Naive thymus-derived CD4-positive, alpha-beta T cell (primary cell): ENCODE measurements at regions of chr13 and their contacts with region 1.

Region 1: GRCh38 chr13:74015137-74015536 is 119.1 kb downstream of the KLF12 start:
- DNase-seq: no peak
- ATAC-seq: no peak
- H3K4me3 ChIP-seq: no peak overlapping the region
- H3K4me3 Mint-ChIP-seq: no peak overlapping the region
- H3K27ac ChIP-seq: no peak overlapping the region
- H3K27ac Mint-ChIP-seq: peak overlapping the region in 1 of 9 donors; percentile 65
- H3K4me1 ChIP-seq: peaks cover 0 to 4% of the 10 kb centered on the region in 2 donors
- H3K4me1 Mint-ChIP-seq: peaks cover 11 to 94% (median 84%) of the 10 kb centered on the region in 7 donors
- H3K27me3 ChIP-seq: no peaks in the 10 kb centered on the region
- H3K27me3 Mint-ChIP-seq: no peaks in the 10 kb centered on the region

Region 2: GRCh38 chr13:73924607-73925006 is 90.5 kb before region 1 on chr13:
- CTCF ChIA-PET with region 1: no interaction called
- POLR2A ChIA-PET with region 1: interaction called, 11 read pairs
- intact Hi-C with region 1: no loop called
- DNase-seq: no peak
- ATAC-seq: no peak
- H3K4me3 ChIP-seq: no peak overlapping the region
- H3K4me3 Mint-ChIP-seq: peak overlapping the region in 6 of 10 donors; percentile 10 to 49 (median 41)
- H3K27ac ChIP-seq: no peak overlapping the region
- H3K27ac Mint-ChIP-seq: peak overlapping the region in 5 of 9 donors; percentile 12 to 45 (median 33)
- H3K4me1 ChIP-seq: peaks cover 10 to 38% of the 10 kb centered on the region in 2 donors
- H3K4me1 Mint-ChIP-seq: peaks cover 21 to 95% (median 85%) of the 10 kb centered on the region in 7 donors
- H3K27me3 ChIP-seq: no peaks in the 10 kb centered on the region
- H3K27me3 Mint-ChIP-seq: no peaks in the 10 kb centered on the region

Region 3: DNA sequence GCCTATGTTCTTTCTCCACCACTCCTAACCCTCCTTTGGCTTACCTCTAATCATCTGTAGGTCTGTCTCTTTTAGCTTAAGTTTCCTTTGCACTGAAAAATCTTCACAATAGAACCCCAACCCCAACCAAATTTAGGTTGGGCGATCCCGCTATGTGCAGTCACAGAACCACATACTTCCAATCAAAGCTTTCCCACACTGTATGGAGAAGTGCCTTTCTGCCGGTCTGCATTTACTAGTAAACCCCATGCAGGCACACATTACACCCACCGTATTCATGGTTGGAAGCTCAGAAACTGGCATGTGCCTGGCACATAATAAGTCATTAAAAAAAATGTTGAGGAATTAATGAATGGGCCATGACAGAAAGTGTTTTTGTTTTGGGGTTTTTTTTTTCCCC is 39.4 kb before region 1 on chr13:
- CTCF ChIA-PET with region 1: interaction called, 6 read pairs
- POLR2A ChIA-PET with region 1: no interaction called
- intact Hi-C with region 1: loop called in 1 of 2 experiments (anchors 5 kb)
- DNase-seq: no peak
- ATAC-seq: no peak
- H3K4me3 ChIP-seq: no peak overlapping the region
- H3K4me3 Mint-ChIP-seq: peak overlapping the region in 1 of 10 donors; percentile 1
- H3K27ac ChIP-seq: no peak overlapping the region
- H3K27ac Mint-ChIP-seq: peak overlapping the region in 5 of 9 donors; percentile 14 to 84 (median 36)
- H3K4me1 ChIP-seq: peaks cover 15 to 17% of the 10 kb centered on the region in 2 donors
- H3K4me1 Mint-ChIP-seq: peaks cover 10 to 87% (median 57%) of the 10 kb centered on the region in 7 donors
- H3K27me3 ChIP-seq: no peaks in the 10 kb centered on the region
- H3K27me3 Mint-ChIP-seq: no peaks in the 10 kb centered on the region

Region 4: DNA sequence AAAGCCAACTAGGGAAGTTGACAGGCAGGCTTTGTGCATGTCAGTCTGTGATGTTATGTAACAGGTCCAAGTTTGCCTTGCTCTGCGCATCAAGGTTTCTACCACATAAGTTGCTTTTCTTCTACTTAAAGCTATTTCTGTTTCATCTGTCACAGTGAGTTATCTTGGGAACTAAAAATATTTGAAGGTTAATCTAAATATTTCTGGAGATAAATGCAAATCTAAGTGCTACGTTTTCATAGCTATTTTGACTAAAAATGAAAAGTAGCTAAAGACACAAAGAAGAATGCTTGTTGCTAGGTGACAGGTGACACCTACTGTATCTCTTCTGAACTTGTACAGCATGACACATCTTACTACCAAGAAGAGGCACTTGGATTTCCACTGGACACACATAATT is 16.5 kb before region 1 on chr13:
- CTCF ChIA-PET with region 1: no interaction called
- POLR2A ChIA-PET with region 1: interaction called, 3 read pairs
- intact Hi-C with region 1: loop called in 1 of 2 experiments (anchors 2 kb)
- DNase-seq: peak in 4 of 9 donors; percentile 12 to 40 (median 28)
- ATAC-seq: peak; percentile 50
- H3K4me3 ChIP-seq: no peak overlapping the region
- H3K4me3 Mint-ChIP-seq: peak overlapping the region in 5 of 10 donors; percentile 6 to 42 (median 14)
- H3K27ac ChIP-seq: peak overlapping the region; percentile 23
- H3K27ac Mint-ChIP-seq: peak overlapping the region in 7 of 9 donors; percentile 16 to 78 (median 47)
- H3K4me1 ChIP-seq: peaks cover 13 to 14% of the 10 kb centered on the region in 2 donors
- H3K4me1 Mint-ChIP-seq: peaks cover 11 to 89% (median 72%) of the 10 kb centered on the region in 7 donors
- H3K27me3 ChIP-seq: no peaks in the 10 kb centered on the region
- H3K27me3 Mint-ChIP-seq: no peaks in the 10 kb centered on the region

Region 5: GRCh38 chr13:74026753-74027152 is 11.6 kb after region 1 on chr13:
- CTCF ChIA-PET with region 1: interaction called, 3 read pairs
- POLR2A ChIA-PET with region 1: interaction called, 4 read pairs
- intact Hi-C with region 1: loop called in 1 of 2 experiments (anchors 1 kb)
- DNase-seq: peak; percentile 22 to 77 (median 68)
- ATAC-seq: peak; percentile 94
- H3K4me3 ChIP-seq: peak overlapping the region; percentile 21
- H3K4me3 Mint-ChIP-seq: peak overlapping the region; percentile 77 to 92 (median 84)
- H3K27ac ChIP-seq: peak overlapping the region; percentile 77
- H3K27ac Mint-ChIP-seq: peak overlapping the region; percentile 80 to 97 (median 94)
- H3K4me1 ChIP-seq: peaks cover 51 to 59% of the 10 kb centered on the region in 2 donors
- H3K4me1 Mint-ChIP-seq: peaks cover 36 to 97% (median 94%) of the 10 kb centered on the region in 7 donors
- H3K27me3 ChIP-seq: no peaks in the 10 kb centered on the region
- H3K27me3 Mint-ChIP-seq: no peaks in the 10 kb centered on the region

Region 6: GRCh38 chr13:75326173-75327134 is 1311.3 kb after region 1 on chr13:
- CTCF ChIA-PET with region 1: no interaction called
- POLR2A ChIA-PET with region 1: no interaction called
- intact Hi-C with region 1: no loop called
- DNase-seq: peak; percentile 19 to 88 (median 82)
- ATAC-seq: peak; percentile 94
- H3K4me3 ChIP-seq: peak overlapping the region; percentile 71
- H3K4me3 Mint-ChIP-seq: peak overlapping the region; percentile 90 to 97 (median 94)
- H3K27ac ChIP-seq: peak overlapping the region; percentile 87
- H3K27ac Mint-ChIP-seq: peak overlapping the region; percentile 92 to 99 (median 98)
- H3K4me1 ChIP-seq: peaks cover 4 to 24% of the 10 kb centered on the region in 2 donors
- H3K4me1 Mint-ChIP-seq: peaks cover 22 to 63% (median 55%) of the 10 kb centered on the region in 7 donors
- H3K27me3 ChIP-seq: no peaks in the 10 kb centered on the region
- H3K27me3 Mint-ChIP-seq: no peaks in the 10 kb centered on the region